Activated T-helper 2 cell treated with anti-CD3 and anti-CD28 coated beads, Interferon-gamma antibody, Interleukin-2, Interleukin-4, amounts not matched to agents 10 μg/mL and 5 μg/mL and 100 μg/mL, durations not matched to agents 14 hours and 24 hours and 36 hours (primary cell): ENCODE measurements at regions of chr15 and their contacts with region 1.

Region 1: DNA sequence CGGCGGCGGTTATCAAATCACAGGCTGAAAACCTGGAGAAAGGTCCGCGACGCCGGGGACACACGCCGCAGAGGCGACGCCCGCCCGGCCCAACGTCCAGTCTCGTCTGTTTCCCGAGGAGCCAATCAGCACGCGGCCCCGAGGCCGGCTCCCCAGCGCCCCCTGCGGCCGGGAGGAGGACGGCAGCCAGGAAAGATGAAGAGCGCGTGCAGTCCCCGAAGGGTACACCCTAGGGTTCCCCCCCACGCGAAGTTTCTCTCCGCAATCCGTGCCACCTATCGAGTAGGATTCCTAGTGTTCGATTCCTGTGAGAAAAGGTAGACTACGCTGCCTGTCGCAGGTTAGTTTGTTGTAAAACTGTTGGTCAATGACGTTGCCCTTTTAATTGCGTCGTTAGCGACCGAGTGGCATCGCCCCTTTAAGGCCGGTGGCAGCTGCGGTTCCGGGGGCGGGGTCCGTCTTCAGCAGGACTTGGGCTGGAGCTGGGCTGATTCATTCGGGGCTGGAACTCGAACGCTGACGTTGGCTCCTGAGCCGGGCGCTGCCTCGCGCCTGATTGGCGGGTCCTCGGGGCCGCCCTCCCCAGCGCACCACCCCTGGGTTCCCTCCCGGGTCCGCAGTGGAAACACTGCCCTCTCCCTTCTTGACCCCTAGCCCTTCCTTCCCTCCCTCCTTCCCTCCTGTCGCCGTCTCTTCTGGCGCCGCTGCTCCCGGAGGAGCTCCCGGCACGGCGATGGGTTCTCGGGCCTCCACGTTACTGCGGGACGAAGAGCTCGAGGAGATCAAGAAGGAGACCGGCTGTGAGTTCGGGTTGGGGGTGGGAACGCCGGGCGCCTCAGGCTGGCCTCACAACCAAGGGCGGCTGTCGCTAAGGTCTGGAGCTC is at the starts of genes CHP1 and EXD1:
- DNase-seq: peak; percentile 96
- H3K4me3 Mint-ChIP-seq: peak within 1 kb of the TSS; percentile 87
- H3K27ac Mint-ChIP-seq: peak within 1 kb of the TSS; percentile 85
- H3K4me1 Mint-ChIP-seq: peaks cover 24% of the 10 kb centered on the region
- H3K27me3 Mint-ChIP-seq: peaks cover 8% of the 10 kb centered on the region
- total RNA-seq, gene CHP1: 58.3 and 58.6 TPM in 2 replicates
- total RNA-seq, gene EXD1: not detected in 2 replicates

Region 2: DNA sequence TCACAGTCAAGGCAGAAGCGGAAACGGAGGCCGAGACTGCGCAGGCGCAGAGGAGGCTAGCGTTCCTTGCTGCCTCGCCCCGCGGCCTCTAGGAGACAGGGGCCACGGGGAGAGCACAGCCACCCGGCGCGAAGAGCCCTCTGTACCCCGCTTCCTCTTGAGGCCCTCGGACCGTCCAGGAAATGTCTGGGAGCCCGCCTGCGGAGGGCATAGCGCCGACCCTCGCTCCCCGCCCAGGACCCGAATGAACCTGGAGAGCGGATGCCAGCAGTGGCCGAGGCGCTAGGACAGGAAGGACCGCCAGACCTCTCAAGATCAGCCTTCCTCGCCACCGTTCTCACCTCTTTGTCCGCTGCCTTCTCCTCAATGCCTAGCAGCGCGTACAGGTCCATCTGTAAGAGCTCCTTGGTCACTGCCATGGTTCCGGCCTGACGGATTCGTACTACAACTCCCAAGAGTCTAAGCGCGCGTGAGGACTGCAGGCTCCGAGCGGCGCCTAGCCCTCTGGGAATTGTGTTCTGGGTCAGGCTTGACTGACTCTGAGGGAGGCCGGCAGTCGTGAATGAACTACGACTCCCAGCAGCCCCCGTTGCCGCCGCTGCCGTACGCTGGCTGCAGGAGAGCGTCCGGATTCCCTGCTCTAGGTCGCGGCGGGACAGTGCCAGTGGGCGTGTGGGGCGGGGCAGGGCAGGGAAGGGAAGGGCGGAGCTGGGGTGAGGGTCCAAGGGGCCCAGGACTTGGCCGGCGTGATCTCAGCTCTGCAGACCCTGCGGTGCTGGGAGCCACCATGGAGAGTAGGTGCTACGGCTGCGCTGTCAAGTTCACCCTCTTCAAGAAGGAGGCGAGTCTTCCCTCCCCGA is 423.6 kb before region 1 on chr15 and contains the starts of genes DNAJC17 and ZFYVE19:
- intact Hi-C with region 1: loop called (anchors 1 kb)
- DNase-seq: peak; percentile 93
- H3K4me3 Mint-ChIP-seq: peak within 1 kb of the TSS; percentile 96
- H3K27ac Mint-ChIP-seq: peak within 1 kb of the TSS; percentile 98
- H3K4me1 Mint-ChIP-seq: peaks cover 18% of the 10 kb centered on the region
- H3K27me3 Mint-ChIP-seq: no peaks in the 10 kb centered on the region
- total RNA-seq, gene DNAJC17: 44.4 and 48.0 TPM in 2 replicates
- total RNA-seq, gene ZFYVE19: 37.6 and 39.3 TPM in 2 replicates

Region 3: GRCh38 chr15:40952901-40953712 is 277.8 kb before region 1 on chr15 and contains the start of gene CHAC1:
- intact Hi-C with region 1: loop called (anchors 2 kb)
- DNase-seq: peak; percentile 96
- H3K4me3 Mint-ChIP-seq: peak within 1 kb of the TSS; percentile 84
- H3K27ac Mint-ChIP-seq: peak within 1 kb of the TSS; percentile 87
- H3K4me1 Mint-ChIP-seq: peaks cover 29% of the 10 kb centered on the region
- H3K27me3 Mint-ChIP-seq: no peaks in the 10 kb centered on the region
- total RNA-seq, gene CHAC1: 3.6 and 4.5 TPM in 2 replicates

Region 4: DNA sequence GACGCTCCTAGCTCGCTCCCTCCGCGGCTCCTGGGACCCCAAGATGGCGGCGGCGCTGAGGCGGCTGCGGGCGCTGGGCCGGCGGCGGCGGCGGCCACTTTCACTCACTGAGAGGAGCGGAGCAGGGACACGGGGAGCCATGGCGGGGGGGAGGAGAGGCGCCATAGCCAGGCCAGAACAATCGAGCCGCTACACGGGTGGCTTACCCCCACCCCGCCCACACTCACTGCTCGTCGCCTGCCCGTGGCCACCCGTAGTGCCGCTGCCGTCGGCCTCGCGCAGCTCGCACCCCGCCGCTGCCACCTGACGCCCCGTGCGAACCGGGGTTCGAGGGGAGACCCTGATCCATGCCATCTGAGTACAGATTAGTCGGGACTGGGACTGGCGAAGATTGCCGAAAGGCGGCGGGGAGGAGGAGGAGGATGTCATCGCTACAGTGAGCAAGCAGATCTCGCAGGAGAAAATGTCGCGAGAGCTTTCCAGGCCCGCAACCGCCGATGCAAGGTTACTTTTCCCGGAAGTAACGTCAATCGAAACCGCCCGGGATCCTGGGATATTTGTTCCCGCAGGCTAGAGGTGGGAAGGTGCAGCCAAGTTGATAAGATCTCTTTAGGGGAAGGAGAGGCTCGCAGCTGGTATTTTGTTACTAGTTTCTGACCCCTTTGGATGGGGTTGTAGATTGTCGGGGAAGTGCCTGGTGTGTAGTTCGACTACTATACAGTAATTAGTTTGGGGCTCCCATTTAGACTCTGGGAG is 114.6 kb before region 1 on chr15 and contains the start of gene INO80:
- intact Hi-C with region 1: loop called (anchors 1 kb)
- DNase-seq: peak; percentile 96
- H3K4me3 Mint-ChIP-seq: peak within 1 kb of the TSS; percentile 97
- H3K27ac Mint-ChIP-seq: peak within 1 kb of the TSS; percentile 99
- H3K4me1 Mint-ChIP-seq: peaks cover 8% of the 10 kb centered on the region
- H3K27me3 Mint-ChIP-seq: no peaks in the 10 kb centered on the region
- total RNA-seq, gene INO80: 33.2 and 35.2 TPM in 2 replicates

Region 5: DNA sequence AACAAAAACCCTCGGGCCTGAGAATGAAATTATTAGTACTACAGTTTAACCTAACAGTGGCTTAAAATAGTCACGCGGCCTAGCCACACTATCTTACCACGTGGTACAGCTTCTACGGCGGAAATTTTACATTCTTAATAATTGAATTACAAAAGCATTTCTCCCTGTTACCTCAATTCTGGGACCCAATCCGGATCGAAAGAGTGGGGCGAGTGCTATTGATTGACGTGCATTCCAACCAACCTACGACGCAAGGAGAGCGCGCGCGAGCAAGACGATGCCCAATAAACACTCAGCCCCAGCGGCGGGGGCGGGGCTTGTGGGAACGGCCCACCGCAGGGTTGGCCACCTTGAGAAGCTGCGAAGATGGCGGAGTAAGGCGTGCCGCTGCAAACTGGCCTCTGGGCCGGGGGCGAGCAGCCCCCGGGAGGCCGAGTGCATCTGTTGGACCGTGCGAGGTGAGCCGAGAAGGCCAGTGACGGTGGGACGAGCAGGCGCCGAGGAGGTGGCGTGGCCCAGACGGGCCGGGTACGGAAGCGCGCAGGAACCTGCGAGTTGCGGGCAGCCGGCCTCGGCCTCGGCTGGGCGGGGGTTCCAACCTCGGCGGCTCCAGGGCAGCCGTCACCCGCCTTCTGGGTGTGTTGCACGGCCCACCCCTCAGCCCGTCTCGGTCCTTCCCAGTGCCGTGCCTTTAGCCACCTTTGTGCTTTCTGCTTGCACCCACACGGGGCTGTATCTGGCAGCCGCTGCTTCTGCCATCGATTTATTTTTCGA is 52.9 kb after region 1 on chr15:
- intact Hi-C with region 1: loop called (anchors 2 kb)
- DNase-seq: peak; percentile 97
- H3K4me3 Mint-ChIP-seq: peak overlapping the region; percentile 99
- H3K27ac Mint-ChIP-seq: peak overlapping the region; percentile 98
- H3K4me1 Mint-ChIP-seq: peaks cover 37% of the 10 kb centered on the region
- H3K27me3 Mint-ChIP-seq: no peaks in the 10 kb centered on the region

Region 6: GRCh38 chr15:41331833-41332787 is 101.2 kb after region 1 on chr15 and contains the start of gene OIP5:
- intact Hi-C with region 1: loop called (anchors 1 kb)
- DNase-seq: peak; percentile 99
- H3K4me3 Mint-ChIP-seq: peak within 1 kb of the TSS; percentile 94
- H3K27ac Mint-ChIP-seq: peak within 1 kb of the TSS; percentile 93
- H3K4me1 Mint-ChIP-seq: peaks cover 33% of the 10 kb centered on the region
- H3K27me3 Mint-ChIP-seq: no peaks in the 10 kb centered on the region
- total RNA-seq, gene OIP5: 13.7 and 16.1 TPM in 2 replicates

Region 7: DNA sequence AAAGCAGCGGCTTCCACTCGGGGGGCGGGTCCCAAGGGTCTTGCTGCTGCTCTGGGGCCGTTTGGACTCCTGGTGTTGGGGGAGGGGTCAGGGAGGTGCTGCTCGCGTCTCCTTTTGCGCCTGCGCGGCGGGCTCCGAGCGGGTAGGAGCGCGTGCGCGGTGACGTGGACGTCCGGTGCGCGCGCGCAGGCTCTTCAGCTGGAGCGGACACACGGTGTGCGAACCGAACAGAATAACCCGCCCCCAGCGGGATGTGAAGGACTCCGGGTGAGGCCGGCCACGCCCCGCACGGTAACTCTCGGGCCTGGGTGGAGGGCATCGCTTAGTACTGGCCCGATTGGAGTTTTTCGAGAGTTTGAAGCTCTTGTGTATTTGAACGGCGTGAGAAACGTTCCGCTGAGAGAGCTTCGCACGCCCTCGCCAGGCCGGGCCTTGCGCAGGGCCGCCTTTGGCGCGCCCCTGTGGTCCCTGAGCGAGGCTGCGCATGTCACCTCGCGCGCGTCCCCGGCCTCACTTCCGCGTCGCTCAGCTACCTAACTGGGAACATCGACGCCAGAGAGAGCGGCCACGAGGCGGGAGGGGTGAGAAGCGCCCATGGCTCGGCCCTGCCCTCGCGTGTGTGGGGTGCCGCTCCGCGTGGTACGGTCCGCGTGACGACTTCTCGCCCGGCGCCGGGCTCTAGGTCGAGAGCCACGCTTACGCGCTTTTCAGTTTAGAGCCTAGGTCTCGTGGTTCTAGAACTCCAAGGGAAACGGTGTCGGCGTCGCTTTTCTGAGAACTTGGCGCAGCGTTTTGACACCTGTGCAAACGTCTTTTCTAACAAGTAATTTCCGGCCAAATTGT is 429.6 kb after region 1 on chr15 and contains the start of gene MGA:
- intact Hi-C with region 1: loop called (anchors 2 kb)
- DNase-seq: peak; percentile 88
- H3K4me3 Mint-ChIP-seq: peak within 1 kb of the TSS; percentile 88
- H3K27ac Mint-ChIP-seq: peak within 1 kb of the TSS; percentile 87
- H3K4me1 Mint-ChIP-seq: peaks cover 32% of the 10 kb centered on the region
- H3K27me3 Mint-ChIP-seq: peaks cover 25% of the 10 kb centered on the region
- total RNA-seq, gene MGA: 37.7 and 38.2 TPM in 2 replicates